Left cardiac atrium (tissue), 4 donors: ENCODE measurements at regions of chr1 and their contacts with region 1.

Region 1: GRCh38 chr1:15741183-15741850 is 982 bp upstream of the TMEM82 start:
- DNase-seq: peak; percentile 80
- ATAC-seq: peak; percentile 80 to 82

Region 2: GRCh38 chr1:15598436-15598835 is 142.9 kb before region 1 on chr1:
- intact Hi-C with region 1: loop called (anchors 2 to 10 kb)
- DNase-seq: no peak
- ATAC-seq: no peak